ENCODE measurements at regions of chr6 and their contacts with region 1.

Region 1: DNA sequence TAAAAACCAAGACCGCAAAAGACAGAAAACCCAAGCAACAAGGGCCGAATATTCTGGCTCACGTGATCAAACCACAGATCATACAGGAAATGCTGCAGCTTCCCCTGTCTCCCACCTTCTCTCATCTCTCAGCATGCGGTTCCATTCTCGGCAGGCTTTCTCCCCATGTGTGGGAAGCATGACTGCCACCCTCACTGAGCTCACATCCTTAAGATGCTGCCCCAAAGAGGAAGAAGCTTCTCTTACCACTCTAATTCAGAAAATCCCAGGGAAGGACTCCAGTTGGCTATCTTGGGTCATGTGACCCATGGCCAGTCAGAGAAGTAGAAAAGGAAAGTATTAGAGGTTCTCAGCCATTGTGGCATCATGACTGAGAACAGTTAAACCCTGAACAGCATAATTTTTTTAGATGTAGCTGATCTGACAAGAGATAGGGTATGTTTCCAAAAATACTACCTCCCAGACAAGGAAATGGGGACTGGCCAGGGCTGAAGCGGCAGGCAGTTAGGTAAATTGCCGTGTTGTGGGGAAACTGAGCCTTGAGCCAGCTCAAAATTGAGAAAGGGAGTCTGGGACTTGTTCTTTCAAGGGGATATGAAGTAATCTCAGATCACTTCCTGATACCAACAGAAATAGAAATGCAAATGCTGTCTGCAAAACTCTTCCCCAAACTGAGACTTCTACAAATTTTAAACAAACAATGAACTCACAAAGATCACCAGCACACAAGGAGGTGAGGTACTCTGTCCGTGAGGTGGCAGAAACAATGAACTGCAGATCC is 37.1 kb upstream of the GRM4 start:
- DNase-seq: peak; percentile 79 to 90 (median 81)
- H3K4me3 ChIP-seq: peak overlapping the region in 1 of 2 donors; percentile 32
- H3K4me3 Mint-ChIP-seq: peak overlapping the region; percentile 45 to 80 (median 74)
- H3K27ac ChIP-seq: peak overlapping the region; percentile 33
- H3K27ac Mint-ChIP-seq: peak overlapping the region; percentile 72 to 95 (median 82)
- H3K4me1 ChIP-seq: peaks cover 25% of the 10 kb centered on the region
- H3K4me1 Mint-ChIP-seq: peaks cover 22 to 26% (median 24%) of the 10 kb centered on the region in 4 donors
- H3K27me3 ChIP-seq: no peaks in the 10 kb centered on the region
- H3K27me3 Mint-ChIP-seq: no peaks in the 10 kb centered on the region

Region 2: DNA sequence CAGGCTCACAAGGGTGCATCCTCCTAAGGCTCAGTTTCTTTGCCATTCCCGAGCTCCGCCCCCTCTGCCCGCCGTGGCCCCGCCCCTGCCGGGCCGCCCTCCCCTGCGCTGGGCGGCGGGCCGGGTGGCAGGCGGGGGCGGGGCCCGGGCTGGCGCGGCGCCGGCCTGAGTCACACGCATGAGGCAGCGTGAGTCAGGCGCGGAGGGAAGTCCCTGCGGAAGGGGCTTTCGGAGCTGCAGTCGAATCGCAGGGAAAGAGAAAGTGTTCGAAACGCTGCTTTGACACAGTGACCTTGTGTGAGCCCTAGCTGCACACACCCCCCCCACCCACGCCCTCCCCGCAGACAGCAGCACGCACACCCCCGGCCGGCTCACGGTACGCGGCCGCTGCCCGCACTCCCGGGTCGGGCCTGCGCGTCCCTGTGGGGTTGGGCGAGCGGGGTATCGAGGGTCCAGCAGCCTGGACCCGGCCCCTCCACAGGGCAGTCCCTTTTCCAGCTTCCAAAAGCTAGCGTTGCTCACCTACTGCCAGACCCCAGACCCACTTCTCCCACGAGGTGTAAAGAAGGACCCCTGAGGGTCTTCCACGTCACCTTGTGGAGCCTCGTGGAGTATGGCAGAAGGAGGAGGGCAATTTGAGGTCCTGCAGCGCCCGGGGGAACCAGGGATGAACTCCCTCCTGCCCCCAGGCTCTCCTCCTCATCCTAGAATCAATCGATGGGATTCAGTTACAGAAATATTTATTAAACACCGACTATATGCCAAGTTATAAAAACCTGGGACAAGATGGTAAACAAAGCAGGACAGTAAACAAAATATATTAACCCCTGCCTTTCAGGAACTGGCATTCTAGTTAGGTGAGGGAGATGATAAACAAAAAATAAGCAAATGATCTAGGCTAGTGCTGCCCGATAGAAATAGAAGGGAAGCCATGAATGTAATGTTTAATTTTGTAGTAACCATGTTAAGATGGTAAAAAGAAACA is 41.3 kb after region 1 on chr6:
- CTCF ChIA-PET with region 1: interaction called, 4 read pairs
- POLR2A ChIA-PET with region 1: interaction called, 13 read pairs
- intact Hi-C with region 1: no loop called
- DNase-seq: peak; percentile 90 to 98 (median 94)
- H3K4me3 ChIP-seq: peak overlapping the region; percentile 77 to 86
- H3K4me3 Mint-ChIP-seq: peak overlapping the region; percentile 60 to 81 (median 74)
- H3K27ac ChIP-seq: peak overlapping the region; percentile 99
- H3K27ac Mint-ChIP-seq: peak overlapping the region; percentile 72 to 99 (median 96)
- H3K4me1 ChIP-seq: peaks cover 14% of the 10 kb centered on the region
- H3K4me1 Mint-ChIP-seq: peaks cover 4 to 13% (median 10%) of the 10 kb centered on the region in 4 donors
- H3K27me3 ChIP-seq: no peaks in the 10 kb centered on the region
- H3K27me3 Mint-ChIP-seq: no peaks in the 10 kb centered on the region